Heart right ventricle (tissue), 16 donors: ENCODE measurements at regions of chr4 and their contacts with region 1.

Region 1: GRCh38 chr4:71184195-71184781 is 154.5 kb upstream of the SLC4A4 start:
- DNase-seq: peak in 1 of 2 donors; percentile 25
- ATAC-seq: no peak
- H3K4me3 ChIP-seq: no peak overlapping the region
- H3K27ac ChIP-seq: no peak overlapping the region
- H3K4me1 ChIP-seq: peaks cover 0 to 30% (median 16%) of the 10 kb centered on the region in 9 donors
- H3K27me3 ChIP-seq: peaks cover 0 to 48% (median 11%) of the 10 kb centered on the region in 7 donors
- CTCF ChIP-seq: peak; percentile 12 to 79 (median 67)

Region 2: GRCh38 chr4:71009890-71010588 is 174.2 kb before region 1 on chr4:
- intact Hi-C with region 1: loop called in 1 of 10 experiments (anchors 10 kb)
- DNase-seq: no peak
- ATAC-seq: peak in 4 of 8 donors; percentile 46 to 57 (median 50)
- H3K4me3 ChIP-seq: no peak overlapping the region
- H3K27ac ChIP-seq: no peak overlapping the region
- H3K4me1 ChIP-seq: peaks cover 0 to 23% (median 0%) of the 10 kb centered on the region in 9 donors
- H3K27me3 ChIP-seq: no peaks in the 10 kb centered on the region
- CTCF ChIP-seq: peak; percentile 47 to 78 (median 67)

Region 3: GRCh38 chr4:71259911-71260331 is 75.6 kb after region 1 on chr4:
- intact Hi-C with region 1: loop called in 1 of 10 experiments (anchors 5 kb)
- DNase-seq: peak in 1 of 2 donors; percentile 26
- ATAC-seq: peak; percentile 10 to 74 (median 48)
- H3K4me3 ChIP-seq: no peak overlapping the region
- H3K27ac ChIP-seq: peak overlapping the region in 9 of 10 donors; percentile 38 to 83 (median 76)
- H3K4me1 ChIP-seq: peaks cover 0 to 63% (median 33%) of the 10 kb centered on the region in 9 donors
- H3K27me3 ChIP-seq: no peaks in the 10 kb centered on the region
- CTCF ChIP-seq: no peak

Region 4: GRCh38 chr4:71355045-71355444 is 170.8 kb after region 1 on chr4:
- intact Hi-C with region 1: no loop called
- DNase-seq: no peak
- ATAC-seq: no peak
- H3K4me3 ChIP-seq: no peak overlapping the region
- H3K27ac ChIP-seq: no peak overlapping the region
- H3K4me1 ChIP-seq: no peaks in the 10 kb centered on the region
- H3K27me3 ChIP-seq: no peaks in the 10 kb centered on the region
- CTCF ChIP-seq: no peak

Region 5: DNA sequence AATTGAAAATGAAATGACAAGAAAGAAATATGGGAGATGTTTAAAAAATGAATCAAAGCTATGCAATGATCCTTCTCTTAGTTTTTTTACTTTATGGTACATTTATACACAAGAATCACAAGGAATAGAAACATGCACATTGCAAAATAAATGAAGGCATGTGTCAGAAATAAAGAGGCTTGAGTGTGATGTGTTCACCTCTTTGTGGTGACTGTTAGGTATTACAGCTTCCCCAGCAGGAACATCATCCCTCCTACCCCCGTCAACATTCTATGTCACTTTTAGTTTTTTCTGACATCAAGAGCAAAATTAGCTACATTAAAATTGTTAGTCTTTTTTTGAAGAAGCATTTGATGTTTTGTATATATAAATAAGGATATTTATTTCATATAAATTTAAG is 369.3 kb after region 1 on chr4:
- intact Hi-C with region 1: loop called in 9 of 10 experiments (anchors 5 to 10 kb)
- DNase-seq: no peak
- ATAC-seq: peak in 4 of 8 donors; percentile 70 to 82 (median 76)
- H3K4me3 ChIP-seq: no peak overlapping the region
- H3K27ac ChIP-seq: no peak overlapping the region
- H3K4me1 ChIP-seq: no peaks in the 10 kb centered on the region
- H3K27me3 ChIP-seq: no peaks in the 10 kb centered on the region
- CTCF ChIP-seq: peak in 7 of 9 donors; percentile 48 to 65 (median 59)

Region 6: GRCh38 chr4:71713611-71714203 is 529.4 kb after region 1 on chr4:
- intact Hi-C with region 1: loop called in 7 of 10 experiments (anchors 1 to 10 kb)
- DNase-seq: peak in 1 of 2 donors; percentile 5
- ATAC-seq: no peak
- H3K4me3 ChIP-seq: no peak overlapping the region
- H3K27ac ChIP-seq: no peak overlapping the region
- H3K4me1 ChIP-seq: no peaks in the 10 kb centered on the region
- H3K27me3 ChIP-seq: no peaks in the 10 kb centered on the region
- CTCF ChIP-seq: peak; percentile 16 to 70 (median 56)